ENCODE measurements at regions of chr6 and their contacts with region 1.

Region 1: GRCh38 chr6:7615611-7616383 is 25.8 kb downstream of the SNRNP48 start:
- DNase-seq: no peak
- H3K4me3 Mint-ChIP-seq: no peak overlapping the region
- H3K27ac Mint-ChIP-seq: no peak overlapping the region
- H3K4me1 Mint-ChIP-seq: peaks cover 17% of the 10 kb centered on the region
- H3K27me3 Mint-ChIP-seq: no peaks in the 10 kb centered on the region

Region 2: DNA sequence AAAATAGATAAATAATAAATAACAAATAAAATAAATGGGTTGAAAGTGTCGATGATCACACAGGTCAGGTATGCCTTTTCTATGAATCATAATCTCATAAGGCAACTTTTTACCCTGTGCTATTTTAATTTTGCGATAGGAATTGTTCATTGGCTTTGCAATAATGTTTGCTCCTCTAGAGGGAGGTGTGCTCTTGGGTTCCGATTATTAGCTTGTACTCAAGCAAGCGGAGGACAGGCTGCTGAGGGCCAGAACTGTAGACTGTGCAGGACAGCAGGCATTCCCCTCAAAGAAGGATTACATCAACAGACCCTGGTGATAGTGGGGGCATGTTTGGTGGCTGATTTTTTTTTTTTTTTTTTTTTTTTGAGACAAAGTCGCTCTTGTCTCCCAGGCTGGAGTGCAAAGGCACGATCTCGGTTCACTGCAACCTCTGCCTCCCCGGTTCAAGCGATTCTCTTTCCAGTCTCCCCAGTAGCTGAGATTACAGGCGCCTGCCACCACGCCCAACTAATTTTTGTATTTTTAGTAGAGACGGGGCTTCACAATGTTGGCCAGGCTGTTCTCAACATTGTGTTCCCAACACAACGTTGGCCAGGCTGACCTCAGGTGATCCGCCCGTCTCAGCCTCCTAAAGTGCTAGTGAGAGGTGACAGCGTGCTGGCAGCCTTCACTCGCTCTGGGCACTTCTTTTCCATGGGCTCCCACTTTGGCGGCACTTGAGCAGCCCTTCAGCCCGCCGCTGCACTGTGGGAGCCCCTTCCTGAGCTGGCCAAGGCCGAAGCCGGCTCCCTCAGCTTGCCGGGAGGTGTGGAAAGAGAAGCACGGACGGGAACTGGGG is 190.6 kb before region 1 on chr6:
- intact Hi-C with region 1: loop called (anchors 10 kb)
- DNase-seq: no peak
- H3K4me3 Mint-ChIP-seq: no peak overlapping the region
- H3K27ac Mint-ChIP-seq: no peak overlapping the region
- H3K4me1 Mint-ChIP-seq: no peaks in the 10 kb centered on the region
- H3K27me3 Mint-ChIP-seq: no peaks in the 10 kb centered on the region

Region 3: GRCh38 chr6:7784706-7785105 is 168.9 kb after region 1 on chr6:
- intact Hi-C with region 1: no loop called
- DNase-seq: no peak
- H3K4me3 Mint-ChIP-seq: no peak overlapping the region
- H3K27ac Mint-ChIP-seq: no peak overlapping the region
- H3K4me1 Mint-ChIP-seq: no peaks in the 10 kb centered on the region
- H3K27me3 Mint-ChIP-seq: peaks cover 5% of the 10 kb centered on the region